Naive thymus-derived CD4-positive, alpha-beta T cell (primary cell): ENCODE measurements at regions of chr12 and their contacts with region 1.

Region 1: GRCh38 chr12:27383429-27384260 is 51.0 kb downstream of the BMAL2 start:
- DNase-seq: peak; percentile 8 to 70 (median 31)
- ATAC-seq: peak; percentile 78
- H3K4me3 ChIP-seq: no peak overlapping the region
- H3K4me3 Mint-ChIP-seq: no peak overlapping the region
- H3K27ac ChIP-seq: no peak overlapping the region
- H3K27ac Mint-ChIP-seq: no peak overlapping the region
- H3K4me1 ChIP-seq: no peaks in the 10 kb centered on the region
- H3K4me1 Mint-ChIP-seq: peaks cover 0 to 3% (median 0%) of the 10 kb centered on the region in 7 donors
- H3K27me3 ChIP-seq: no peaks in the 10 kb centered on the region
- H3K27me3 Mint-ChIP-seq: peaks cover 0 to 4% (median 0%) of the 10 kb centered on the region in 5 donors

Region 2: GRCh38 chr12:27034607-27035293 is 348.9 kb before region 1 on chr12:
- CTCF ChIA-PET with region 1: no interaction called
- POLR2A ChIA-PET with region 1: no interaction called
- intact Hi-C with region 1: loop called in 1 of 2 experiments (anchors 1 kb)
- DNase-seq: no peak
- ATAC-seq: no peak
- H3K4me3 ChIP-seq: no peak overlapping the region
- H3K4me3 Mint-ChIP-seq: no peak overlapping the region
- H3K27ac ChIP-seq: no peak overlapping the region
- H3K27ac Mint-ChIP-seq: no peak overlapping the region
- H3K4me1 ChIP-seq: no peaks in the 10 kb centered on the region
- H3K4me1 Mint-ChIP-seq: peaks cover 0 to 3% (median 0%) of the 10 kb centered on the region in 7 donors
- H3K27me3 ChIP-seq: no peaks in the 10 kb centered on the region
- H3K27me3 Mint-ChIP-seq: no peaks in the 10 kb centered on the region

Region 3: DNA sequence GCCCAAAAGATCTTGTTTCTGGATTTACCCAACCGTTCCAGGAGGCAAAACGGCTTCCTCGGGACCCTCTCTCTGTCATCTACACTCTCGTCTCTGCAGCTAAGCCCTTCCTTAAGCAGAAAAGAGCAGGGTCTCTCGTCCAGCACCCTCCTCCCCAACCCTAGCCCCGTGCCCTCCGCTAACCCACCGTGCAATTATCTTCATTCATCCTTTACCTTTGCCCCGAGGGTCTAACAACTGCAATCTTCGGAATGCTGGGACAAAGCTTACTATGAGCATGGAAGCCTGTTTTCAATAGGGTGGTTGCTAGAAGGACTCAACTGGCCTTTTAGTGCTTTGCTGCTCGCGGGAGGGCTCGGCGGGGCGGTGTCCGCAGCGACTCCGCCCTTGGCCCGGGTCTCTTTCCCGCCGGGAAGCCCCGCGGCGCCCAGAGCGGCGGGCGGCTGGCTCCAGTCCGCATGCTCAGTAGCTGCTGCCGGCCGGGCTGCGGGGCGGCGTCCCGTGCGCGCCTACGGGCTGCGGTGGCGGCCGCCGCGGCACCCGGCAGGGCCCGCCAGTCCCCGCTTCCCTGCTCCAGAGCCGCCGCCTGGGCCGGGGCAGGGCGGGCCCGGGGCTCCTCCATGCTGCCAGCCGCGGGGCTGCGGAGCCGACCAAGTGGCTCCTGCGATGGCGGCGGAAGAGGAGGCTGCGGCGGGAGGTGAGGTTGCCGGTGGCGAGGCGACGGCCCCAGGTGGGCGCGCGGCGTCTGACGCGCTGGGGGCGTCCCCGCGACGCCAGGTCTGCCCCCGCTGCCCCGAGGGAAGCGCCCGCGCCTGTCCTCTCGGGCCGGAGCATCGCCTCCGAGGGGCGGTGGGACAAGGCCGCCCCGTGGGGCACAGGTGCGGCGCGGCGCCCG is 51.0 kb before region 1 on chr12 and contains the start of gene BMAL2:
- CTCF ChIA-PET with region 1: no interaction called
- POLR2A ChIA-PET with region 1: no interaction called
- intact Hi-C with region 1: loop called in 1 of 2 experiments (anchors 2 kb)
- DNase-seq: peak in 8 of 9 donors; percentile 12 to 70 (median 16)
- ATAC-seq: peak; percentile 62
- H3K4me3 ChIP-seq: peak within 1 kb of the TSS; percentile 46
- H3K4me3 Mint-ChIP-seq: peak within 1 kb of the TSS; percentile 80 to 97 (median 88)
- H3K27ac ChIP-seq: no peak within 1 kb of the TSS
- H3K27ac Mint-ChIP-seq: peak within 1 kb of the TSS in 1 of 9 donors; percentile 94
- H3K4me1 ChIP-seq: peaks cover 4% of the 10 kb centered on the region in 2 donors
- H3K4me1 Mint-ChIP-seq: peaks cover 7 to 51% (median 15%) of the 10 kb centered on the region in 7 donors
- H3K27me3 ChIP-seq: peaks cover 0 to 8% of the 10 kb centered on the region in 2 donors
- H3K27me3 Mint-ChIP-seq: peaks cover 7 to 48% (median 46%) of the 10 kb centered on the region in 5 donors
- total RNA-seq, gene BMAL2: 0.19 to 37.7 (median 0.41) TPM in 4 of 5 experiments, not detected in the other

Region 4: GRCh38 chr12:27703710-27704452 is 320.2 kb after region 1 on chr12:
- CTCF ChIA-PET with region 1: no interaction called
- POLR2A ChIA-PET with region 1: no interaction called
- intact Hi-C with region 1: loop called in 1 of 2 experiments (anchors 2 kb)
- DNase-seq: peak; percentile 11 to 64 (median 56)
- ATAC-seq: peak; percentile 97
- H3K4me3 ChIP-seq: no peak overlapping the region
- H3K4me3 Mint-ChIP-seq: no peak overlapping the region
- H3K27ac ChIP-seq: no peak overlapping the region
- H3K27ac Mint-ChIP-seq: no peak overlapping the region
- H3K4me1 ChIP-seq: no peaks in the 10 kb centered on the region
- H3K4me1 Mint-ChIP-seq: peaks cover 0 to 3% (median 0%) of the 10 kb centered on the region in 7 donors
- H3K27me3 ChIP-seq: no peaks in the 10 kb centered on the region
- H3K27me3 Mint-ChIP-seq: peaks cover 7 to 22% (median 13%) of the 10 kb centered on the region in 5 donors